CD4-positive, alpha-beta memory T cell (primary cell): ENCODE measurements at regions of chr20 and their contacts with region 1.

Region 1: DNA sequence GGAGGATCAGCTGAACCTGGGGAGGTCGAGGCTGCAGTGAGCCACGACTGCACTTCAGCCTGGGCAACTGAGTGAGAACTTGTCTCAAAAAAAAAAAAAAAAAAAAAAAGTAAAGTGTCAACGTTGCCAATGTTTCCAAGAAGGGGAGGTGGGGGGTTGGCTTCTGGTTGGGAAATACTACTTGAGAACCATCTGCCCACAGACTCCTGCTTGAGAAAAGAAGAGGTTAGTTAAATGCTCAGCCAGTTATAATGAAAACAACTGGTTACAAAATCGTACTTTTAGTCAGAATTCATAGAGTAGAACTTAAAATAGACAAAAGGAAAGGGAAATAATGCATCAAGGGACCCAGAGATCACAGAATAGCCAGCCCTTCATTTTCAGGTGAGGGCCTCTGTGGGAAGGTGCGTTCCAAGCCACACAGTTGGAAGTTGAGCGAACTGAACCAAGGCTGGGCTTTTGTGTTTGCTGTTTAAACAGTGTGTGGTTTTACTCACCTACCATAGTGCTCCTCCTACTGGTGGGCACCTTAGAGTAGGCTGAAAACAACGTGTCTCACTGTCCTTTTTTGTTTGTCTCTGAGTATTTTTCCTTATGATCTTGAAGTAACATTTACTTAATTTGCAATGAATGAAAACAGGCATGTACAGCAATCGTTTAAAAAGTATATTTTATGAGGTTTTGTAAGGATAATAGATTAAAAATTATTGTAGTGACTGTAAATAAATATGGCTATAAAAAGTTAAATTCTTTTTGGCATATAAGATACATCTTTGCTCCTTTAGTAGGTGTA is 200.7 kb downstream of the BCAS1 start:
- DNase-seq: peak; percentile 73 to 81 (median 77)
- H3K4me3 ChIP-seq: peak overlapping the region in 1 of 2 donors; percentile 15
- H3K4me3 Mint-ChIP-seq: peak overlapping the region in 7 of 8 donors; percentile 30 to 81 (median 66)
- H3K27ac ChIP-seq: peak overlapping the region; percentile 47
- H3K27ac Mint-ChIP-seq: peak overlapping the region; percentile 73 to 97 (median 93)
- H3K4me1 ChIP-seq: peaks cover 89% of the 10 kb centered on the region
- H3K4me1 Mint-ChIP-seq: peaks cover 57 to 90% (median 69%) of the 10 kb centered on the region in 4 donors
- H3K27me3 ChIP-seq: no peaks in the 10 kb centered on the region
- H3K27me3 Mint-ChIP-seq: peaks cover 0 to 2% of the 10 kb centered on the region in 2 donors

Region 2: DNA sequence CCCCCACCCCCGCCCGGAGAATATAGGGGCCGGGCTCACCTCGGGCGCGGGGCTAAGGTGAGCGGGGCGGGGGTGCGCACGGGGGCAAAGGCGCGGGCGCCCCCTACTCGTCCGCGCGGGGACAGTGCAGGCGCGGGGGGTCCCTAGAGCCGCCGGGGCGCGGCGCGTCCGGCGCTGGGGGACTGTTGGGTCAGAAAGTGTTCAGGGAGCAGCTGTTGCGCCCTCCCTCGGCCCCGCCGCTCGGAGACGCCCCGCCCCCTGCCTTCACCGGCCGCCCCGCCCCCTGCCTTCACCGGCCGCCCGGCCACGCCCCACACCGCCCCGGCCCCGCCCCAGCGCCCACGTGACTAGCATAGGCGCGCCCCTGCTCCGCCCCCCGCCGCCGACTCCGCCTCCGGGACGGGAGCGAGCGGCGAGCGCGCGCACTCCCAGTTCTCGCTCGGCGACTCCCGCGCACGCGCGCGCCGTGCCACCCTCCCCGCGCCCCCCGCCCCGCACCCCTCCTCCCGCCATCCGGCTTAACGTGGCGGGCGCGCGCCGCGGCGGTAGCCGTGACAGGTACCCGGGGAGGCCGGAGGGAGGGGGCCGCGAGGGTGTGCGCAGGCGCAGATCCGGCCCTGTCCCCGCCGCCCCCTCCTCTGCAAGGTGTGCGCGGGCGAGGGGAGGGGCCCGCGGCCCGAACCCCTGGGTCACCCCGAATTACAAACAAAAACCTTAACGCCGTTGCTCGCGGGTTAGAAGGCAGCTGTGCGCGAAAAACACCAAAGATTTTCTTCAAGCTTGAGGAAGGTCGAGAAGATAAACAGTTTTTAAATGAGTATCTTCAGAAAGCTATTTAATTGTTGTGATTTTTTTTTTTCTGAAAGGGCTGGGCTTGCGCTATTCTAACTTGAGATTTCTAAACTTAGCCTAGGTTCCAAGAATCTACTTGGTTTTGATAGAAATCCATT is 275.3 kb before region 1 on chr20:
- CTCF ChIA-PET with region 1: interaction called, 4 read pairs
- POLR2A ChIA-PET with region 1: interaction called, 20 read pairs
- intact Hi-C with region 1: no loop called
- DNase-seq: peak; percentile 92 to 99 (median 96)
- H3K4me3 ChIP-seq: peak overlapping the region in 1 of 2 donors; percentile 79
- H3K4me3 Mint-ChIP-seq: peak overlapping the region; percentile 84 to 97 (median 90)
- H3K27ac ChIP-seq: peak overlapping the region; percentile 86
- H3K27ac Mint-ChIP-seq: peak overlapping the region; percentile 95 to 100 (median 97)
- H3K4me1 ChIP-seq: peaks cover 52% of the 10 kb centered on the region
- H3K4me1 Mint-ChIP-seq: peaks cover 41 to 74% (median 51%) of the 10 kb centered on the region in 4 donors
- H3K27me3 ChIP-seq: no peaks in the 10 kb centered on the region
- H3K27me3 Mint-ChIP-seq: no peaks in the 10 kb centered on the region

Region 3: GRCh38 chr20:53643031-53643832 is 226.4 kb before region 1 on chr20:
- CTCF ChIA-PET with region 1: interaction called, 4 read pairs
- POLR2A ChIA-PET with region 1: interaction called, 21 read pairs
- intact Hi-C with region 1: loop called (anchors 1 kb)
- DNase-seq: peak; percentile 67 to 84 (median 73)
- H3K4me3 ChIP-seq: peak overlapping the region; percentile 19 to 26
- H3K4me3 Mint-ChIP-seq: peak overlapping the region; percentile 75 to 93 (median 86)
- H3K27ac ChIP-seq: peak overlapping the region; percentile 59
- H3K27ac Mint-ChIP-seq: peak overlapping the region; percentile 94 to 99 (median 98)
- H3K4me1 ChIP-seq: peaks cover 37% of the 10 kb centered on the region
- H3K4me1 Mint-ChIP-seq: peaks cover 14 to 52% (median 37%) of the 10 kb centered on the region in 4 donors
- H3K27me3 ChIP-seq: no peaks in the 10 kb centered on the region
- H3K27me3 Mint-ChIP-seq: no peaks in the 10 kb centered on the region

Region 4: DNA sequence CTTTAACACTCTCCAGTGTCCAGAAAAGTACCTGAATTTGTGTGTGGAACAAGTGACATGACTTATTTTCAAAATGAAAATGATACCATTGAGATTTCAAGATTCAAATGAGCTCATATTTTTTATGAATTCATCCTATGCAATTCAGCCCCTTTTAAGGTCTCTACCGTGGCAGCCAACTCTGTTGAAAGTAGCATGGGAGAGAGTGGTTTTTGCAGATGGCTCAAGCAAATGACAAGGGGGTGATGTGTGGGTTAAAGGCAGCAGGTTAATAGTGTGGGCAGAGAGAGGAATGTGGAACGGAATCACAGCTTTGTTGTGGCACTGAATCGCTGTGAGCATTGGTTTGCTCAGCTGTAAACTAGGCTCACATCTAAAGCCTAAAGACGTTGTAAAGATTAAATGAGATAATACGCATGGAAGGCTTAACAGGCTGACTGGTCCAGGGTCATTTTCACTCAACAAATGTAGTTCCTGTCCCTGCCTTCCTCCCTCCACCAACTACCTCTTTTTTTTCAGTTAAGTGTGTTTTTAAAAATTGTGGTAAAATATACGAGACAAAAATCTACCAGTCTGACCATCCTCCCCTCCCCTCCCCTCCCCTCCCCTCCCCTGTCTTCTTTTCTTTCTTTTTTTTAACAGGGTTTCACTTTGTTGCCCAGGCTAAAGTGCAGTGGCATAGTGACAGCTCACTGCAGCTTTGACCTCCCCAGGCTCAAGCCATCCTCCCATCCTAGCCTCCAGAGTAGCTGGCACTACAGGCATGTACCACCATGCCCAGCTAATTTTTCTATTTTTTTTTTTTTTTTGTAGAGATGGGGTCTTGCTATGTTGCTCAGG is 161.3 kb before region 1 on chr20:
- CTCF ChIA-PET with region 1: interaction called, 4 read pairs
- POLR2A ChIA-PET with region 1: interaction called, 5 read pairs
- intact Hi-C with region 1: loop called (anchors 2 kb)
- DNase-seq: peak in 4 of 5 donors; percentile 17 to 41 (median 26)
- H3K4me3 ChIP-seq: no peak overlapping the region
- H3K4me3 Mint-ChIP-seq: peak overlapping the region in 7 of 8 donors; percentile 31 to 91 (median 69)
- H3K27ac ChIP-seq: peak overlapping the region; percentile 3
- H3K27ac Mint-ChIP-seq: peak overlapping the region; percentile 76 to 98 (median 92)
- H3K4me1 ChIP-seq: peaks cover 39% of the 10 kb centered on the region
- H3K4me1 Mint-ChIP-seq: peaks cover 31 to 47% (median 36%) of the 10 kb centered on the region in 4 donors
- H3K27me3 ChIP-seq: no peaks in the 10 kb centered on the region
- H3K27me3 Mint-ChIP-seq: no peaks in the 10 kb centered on the region

Region 5: DNA sequence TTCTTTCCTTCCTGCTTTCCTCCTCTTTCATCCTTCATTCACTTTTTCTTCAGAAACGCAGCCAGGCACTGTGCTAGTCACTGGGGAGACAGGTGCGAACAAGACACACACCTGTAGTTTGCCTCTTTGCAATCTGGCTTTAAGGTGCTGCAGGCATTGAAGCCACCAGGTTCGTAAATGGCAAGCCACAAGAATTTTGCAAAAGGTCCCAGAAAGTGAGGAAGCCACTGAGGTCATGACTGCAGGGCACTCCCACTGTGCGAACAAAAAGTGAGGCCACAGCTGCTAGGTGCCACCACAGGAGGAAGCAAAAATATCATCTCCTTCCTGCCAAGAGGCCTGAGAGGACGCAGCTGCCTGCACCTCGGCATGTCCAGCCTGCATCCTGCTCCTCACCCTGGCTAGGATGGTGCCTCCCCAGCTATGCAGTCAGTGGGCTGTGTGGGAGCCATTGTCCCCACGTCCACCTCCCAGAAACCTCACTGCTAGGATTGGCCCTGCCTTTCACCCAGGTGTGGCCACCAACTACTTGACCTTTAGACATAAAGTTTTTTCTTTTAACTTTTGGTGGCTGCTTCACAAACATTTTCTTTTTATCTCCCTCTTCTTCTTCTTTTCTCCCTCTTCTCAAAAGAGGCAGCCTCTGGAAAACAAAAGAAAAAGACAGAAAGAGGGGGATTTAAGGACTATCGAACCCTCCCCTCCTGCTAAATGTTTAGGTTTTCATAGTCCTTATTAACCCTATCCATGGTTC is 30.1 kb before region 1 on chr20:
- CTCF ChIA-PET with region 1: interaction called, 15 read pairs
- POLR2A ChIA-PET with region 1: interaction called, 20 read pairs
- intact Hi-C with region 1: no loop called
- DNase-seq: peak; percentile 70 to 80 (median 77)
- H3K4me3 ChIP-seq: no peak overlapping the region
- H3K4me3 Mint-ChIP-seq: peak overlapping the region; percentile 33 to 98 (median 82)
- H3K27ac ChIP-seq: peak overlapping the region; percentile 44
- H3K27ac Mint-ChIP-seq: peak overlapping the region; percentile 75 to 100 (median 99)
- H3K4me1 ChIP-seq: peaks cover 89% of the 10 kb centered on the region
- H3K4me1 Mint-ChIP-seq: peaks cover 45 to 82% (median 64%) of the 10 kb centered on the region in 4 donors
- H3K27me3 ChIP-seq: no peaks in the 10 kb centered on the region
- H3K27me3 Mint-ChIP-seq: no peaks in the 10 kb centered on the region

Region 6: GRCh38 chr20:53899351-53900167 is 29.9 kb after region 1 on chr20:
- CTCF ChIA-PET with region 1: interaction called, 6 read pairs
- POLR2A ChIA-PET with region 1: interaction called, 33 read pairs
- intact Hi-C with region 1: loop called (anchors 1 kb)
- DNase-seq: peak; percentile 64 to 81 (median 68)
- H3K4me3 ChIP-seq: no peak overlapping the region
- H3K4me3 Mint-ChIP-seq: peak overlapping the region in 5 of 8 donors; percentile 3 to 56 (median 47)
- H3K27ac ChIP-seq: peak overlapping the region; percentile 6
- H3K27ac Mint-ChIP-seq: peak overlapping the region; percentile 65 to 88 (median 85)
- H3K4me1 ChIP-seq: peaks cover 17% of the 10 kb centered on the region
- H3K4me1 Mint-ChIP-seq: peaks cover 12 to 31% (median 24%) of the 10 kb centered on the region in 4 donors
- H3K27me3 ChIP-seq: no peaks in the 10 kb centered on the region
- H3K27me3 Mint-ChIP-seq: no peaks in the 10 kb centered on the region

Region 7: DNA sequence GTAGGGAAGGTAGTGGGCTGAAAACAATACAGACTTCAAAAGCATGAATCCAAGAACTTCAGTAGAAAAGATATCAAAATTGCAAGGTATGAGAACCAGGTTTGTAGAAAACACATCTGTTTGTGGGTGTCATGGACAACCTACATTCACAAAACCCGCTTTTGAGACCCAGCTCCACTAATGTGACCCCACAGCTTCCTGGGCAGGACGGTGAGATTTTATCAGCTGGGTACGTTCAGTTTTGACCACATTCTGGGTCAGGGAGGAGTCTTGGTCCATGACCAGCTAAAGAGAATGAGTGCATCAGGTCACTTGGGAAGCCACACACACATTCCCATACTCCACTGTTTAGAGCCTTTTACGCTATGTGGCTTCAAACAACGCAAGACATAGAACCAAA is 123.6 kb after region 1 on chr20:
- CTCF ChIA-PET with region 1: no interaction called
- POLR2A ChIA-PET with region 1: no interaction called
- intact Hi-C with region 1: no loop called
- DNase-seq: no peak
- H3K4me3 ChIP-seq: no peak overlapping the region
- H3K4me3 Mint-ChIP-seq: peak overlapping the region in 1 of 8 donors; percentile 21
- H3K27ac ChIP-seq: no peak overlapping the region
- H3K27ac Mint-ChIP-seq: peak overlapping the region in 2 of 7 donors; percentile 14 to 17
- H3K4me1 ChIP-seq: no peaks in the 10 kb centered on the region
- H3K4me1 Mint-ChIP-seq: peaks cover 1 to 9% (median 5%) of the 10 kb centered on the region in 4 donors
- H3K27me3 ChIP-seq: no peaks in the 10 kb centered on the region
- H3K27me3 Mint-ChIP-seq: peaks cover 20 to 31% of the 10 kb centered on the region in 2 donors

Region 8: DNA sequence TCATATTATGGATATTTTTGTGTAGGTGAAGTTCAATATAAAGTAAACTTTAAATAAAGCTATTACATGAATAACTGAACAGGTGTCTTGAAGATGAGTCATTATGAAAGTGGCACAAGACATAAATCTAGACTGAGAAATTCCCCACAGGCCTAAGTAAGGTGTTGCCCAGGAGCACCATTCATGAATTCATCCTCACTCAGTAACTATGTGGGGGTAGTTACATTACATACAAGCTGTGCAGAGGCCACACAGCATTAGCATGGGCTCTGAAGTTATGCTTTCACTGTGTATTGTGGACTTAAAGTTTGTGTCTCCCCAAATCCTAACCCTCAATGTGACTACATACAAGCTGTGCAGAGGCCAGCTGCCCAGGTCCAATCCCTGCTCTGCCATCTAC is 134.8 kb after region 1 on chr20:
- CTCF ChIA-PET with region 1: no interaction called
- POLR2A ChIA-PET with region 1: no interaction called
- intact Hi-C with region 1: no loop called
- DNase-seq: no peak
- H3K4me3 ChIP-seq: no peak overlapping the region
- H3K4me3 Mint-ChIP-seq: no peak overlapping the region
- H3K27ac ChIP-seq: no peak overlapping the region
- H3K27ac Mint-ChIP-seq: no peak overlapping the region
- H3K4me1 ChIP-seq: no peaks in the 10 kb centered on the region
- H3K4me1 Mint-ChIP-seq: no peaks in the 10 kb centered on the region
- H3K27me3 ChIP-seq: no peaks in the 10 kb centered on the region
- H3K27me3 Mint-ChIP-seq: peaks cover 16% of the 10 kb centered on the region in 2 donors

Region 9: DNA sequence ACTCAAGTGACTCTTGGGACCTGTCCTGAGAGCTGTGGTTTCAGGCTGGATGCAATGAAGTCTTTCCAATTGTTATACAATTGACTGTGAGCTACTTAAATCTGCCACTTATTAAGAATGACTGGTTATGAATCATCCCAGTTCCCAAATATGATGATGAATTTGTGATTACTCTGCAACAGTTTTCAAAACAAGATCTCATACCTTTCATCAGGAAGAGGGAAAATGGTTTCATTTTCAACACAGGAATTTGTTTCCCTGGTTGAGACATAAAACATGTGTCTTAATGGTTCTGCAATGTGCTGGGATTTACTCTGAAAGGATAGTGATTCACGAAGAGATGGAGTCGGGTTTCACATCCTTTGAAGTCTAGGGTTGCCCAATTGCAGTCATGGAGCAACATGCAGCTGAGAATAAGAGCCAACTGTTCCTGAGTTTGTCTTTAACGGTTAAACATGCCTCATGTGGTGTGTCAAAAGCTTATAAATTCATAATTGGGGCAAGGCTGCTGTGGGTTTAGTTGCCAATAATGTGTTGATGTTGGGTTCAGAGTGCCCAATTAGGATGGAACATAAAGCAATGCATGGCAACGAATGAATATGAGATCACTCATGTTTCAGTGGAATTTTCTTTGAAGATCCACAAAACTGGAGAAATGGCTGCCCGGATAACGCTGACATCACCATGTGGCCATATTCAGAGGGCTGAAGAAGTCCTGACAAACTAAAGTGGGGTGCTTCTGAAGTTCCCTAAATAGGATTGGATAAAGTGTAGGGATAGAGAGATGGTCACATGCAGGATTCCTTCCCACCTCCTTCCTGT is 263.2 kb after region 1 on chr20:
- CTCF ChIA-PET with region 1: no interaction called
- POLR2A ChIA-PET with region 1: no interaction called
- intact Hi-C with region 1: no loop called
- DNase-seq: no peak
- H3K4me3 ChIP-seq: no peak overlapping the region
- H3K4me3 Mint-ChIP-seq: no peak overlapping the region
- H3K27ac ChIP-seq: no peak overlapping the region
- H3K27ac Mint-ChIP-seq: no peak overlapping the region
- H3K4me1 ChIP-seq: no peaks in the 10 kb centered on the region
- H3K4me1 Mint-ChIP-seq: no peaks in the 10 kb centered on the region
- H3K27me3 ChIP-seq: no peaks in the 10 kb centered on the region
- H3K27me3 Mint-ChIP-seq: peaks cover 6 to 12% of the 10 kb centered on the region in 2 donors